ENCODE measurements at regions of chr19 and their contacts with region 1.

Region 1: DNA sequence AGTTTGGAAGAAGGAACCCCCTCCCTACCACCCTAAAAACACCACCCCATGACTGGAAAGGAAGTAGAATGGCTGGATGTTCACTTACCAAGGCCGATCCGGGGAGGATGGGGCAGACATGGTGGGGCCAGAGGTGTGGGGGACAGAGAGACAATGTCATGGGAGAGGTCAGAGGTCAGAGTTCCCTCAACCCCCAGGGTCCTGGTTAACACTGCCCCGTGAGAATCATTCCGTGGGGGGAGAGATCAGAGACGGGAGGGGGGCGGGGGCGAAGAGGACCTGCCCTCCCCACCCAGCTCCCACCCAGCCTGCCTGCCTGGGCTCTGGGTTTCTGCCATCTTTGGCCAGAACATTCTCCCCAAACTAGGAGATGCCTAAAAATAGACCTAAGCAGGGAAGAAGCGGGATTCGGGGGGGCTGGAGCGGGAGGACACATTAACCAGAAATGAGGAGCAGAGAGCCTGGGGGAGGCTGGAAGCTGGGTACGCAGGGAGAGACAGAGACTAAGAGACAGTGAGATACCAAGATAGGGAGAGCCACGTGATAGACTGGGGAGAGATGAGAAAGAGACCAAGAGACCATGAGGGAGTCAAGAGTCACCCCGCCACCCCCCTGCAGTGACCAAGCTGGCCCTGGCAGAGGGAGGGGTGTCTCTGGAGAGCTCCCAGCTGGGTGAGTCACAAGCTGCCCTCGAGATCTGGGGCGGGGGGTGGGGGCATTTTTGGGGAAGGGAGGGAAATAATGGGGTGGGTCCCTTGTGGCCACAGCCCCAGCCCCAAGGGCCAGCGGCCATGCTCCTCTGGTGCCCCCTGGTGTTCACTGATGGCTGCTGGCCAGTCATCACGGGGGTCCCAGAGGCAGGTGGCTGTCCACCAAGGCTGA is 6.1 kb upstream of the KANK2 start:
- DNase-seq: peak; percentile 97
- H3K4me3 ChIP-seq: peak overlapping the region in 3 of 4 donors; percentile 31 to 45 (median 43)
- H3K27ac ChIP-seq: peak overlapping the region; percentile 91 to 98 (median 94)
- H3K4me1 ChIP-seq: peaks cover 0 to 56% (median 44%) of the 10 kb centered on the region in 4 donors
- H3K27me3 ChIP-seq: no peaks in the 10 kb centered on the region
- CTCF ChIP-seq: peak; percentile 89 to 96 (median 96)
- EP300 ChIP-seq: peak in 3 of 4 donors; percentile 49 to 80 (median 69)
- POLR2A ChIP-seq: no peak

Region 2: GRCh38 chr19:10760273-10760944 is 443.0 kb before region 1 on chr19:
- intact Hi-C with region 1: no loop called
- DNase-seq: no peak
- H3K4me3 ChIP-seq: no peak overlapping the region
- H3K27ac ChIP-seq: no peak overlapping the region
- H3K4me1 ChIP-seq: peaks cover 0 to 18% (median 14%) of the 10 kb centered on the region in 4 donors
- H3K27me3 ChIP-seq: no peaks in the 10 kb centered on the region
- CTCF ChIP-seq: no peak
- EP300 ChIP-seq: no peak
- POLR2A ChIP-seq: no peak

Region 3: GRCh38 chr19:10946964-10947657 is 256.3 kb before region 1 on chr19:
- intact Hi-C with region 1: loop called (anchors 10 kb)
- DNase-seq: no peak
- H3K4me3 ChIP-seq: no peak overlapping the region
- H3K27ac ChIP-seq: no peak overlapping the region
- H3K4me1 ChIP-seq: peaks cover 0 to 4% (median 3%) of the 10 kb centered on the region in 4 donors
- H3K27me3 ChIP-seq: no peaks in the 10 kb centered on the region
- CTCF ChIP-seq: no peak
- EP300 ChIP-seq: no peak
- POLR2A ChIP-seq: no peak